HCT116 (cell line): ENCODE measurements at regions of chr1 and their contacts with region 1.

Region 1: DNA sequence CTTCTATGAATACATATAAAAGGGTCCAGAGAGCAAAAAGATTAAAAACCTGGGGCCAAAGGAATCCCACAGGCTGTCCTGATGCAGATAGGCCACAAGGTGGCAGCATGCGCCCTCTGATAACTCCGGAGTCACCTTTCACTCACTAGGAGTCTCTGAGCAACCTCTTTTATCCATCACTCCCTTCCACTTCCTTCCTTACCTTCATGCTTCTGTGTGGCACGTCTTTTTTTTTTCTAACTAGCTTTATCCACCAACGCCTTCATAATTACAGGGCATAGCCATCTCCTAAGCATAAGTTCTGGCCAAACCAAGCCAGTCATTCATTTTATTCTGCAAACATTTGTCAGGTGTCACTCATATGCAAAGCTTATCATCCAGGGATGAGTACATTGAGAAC is 3.9 kb upstream of the PGLYRP4 start:
- DNase-seq: peak; percentile 55
- ATAC-seq: peak; percentile 68
- H3K4me3 ChIP-seq: no peak overlapping the region
- H3K27ac ChIP-seq: no peak overlapping the region
- H3K4me1 ChIP-seq: no peaks in the 10 kb centered on the region; a peak in 1 of 4 replicates
- H3K27me3 ChIP-seq: peaks cover 22% of the 10 kb centered on the region
- CTCF ChIP-seq: peak; percentile 82 to 85 (median 84)
- POLR2A ChIP-seq: no peak
- RAD21 ChIP-seq: peak; percentile 88

Region 2: DNA sequence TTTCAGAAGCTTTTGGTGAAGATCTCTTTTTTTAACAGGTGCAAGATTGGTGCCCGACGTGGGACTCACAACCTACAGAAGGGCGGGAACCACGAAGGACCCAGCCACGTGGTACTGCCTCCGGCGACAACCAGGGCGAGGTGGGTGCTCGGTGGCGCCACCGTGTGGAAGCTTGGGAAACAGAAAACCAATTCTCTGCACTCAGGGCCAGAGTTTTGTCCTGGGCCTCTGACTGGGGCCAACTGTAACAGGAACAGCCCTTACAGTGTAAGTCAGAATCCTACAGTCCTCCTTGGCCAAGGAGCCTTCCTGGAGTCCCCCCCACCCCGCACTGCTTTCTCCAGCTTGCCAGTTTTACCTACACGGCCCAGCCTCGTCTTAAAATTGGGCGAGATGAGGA is 52.2 kb after region 1 on chr1:
- CTCF ChIA-PET with region 1: interaction called, 4 read pairs
- POLR2A ChIA-PET with region 1: no interaction called
- RAD21 ChIA-PET with region 1: no interaction called
- intact Hi-C with region 1: loop called (anchors 2 kb)
- DNase-seq: peak; percentile 39
- ATAC-seq: peak; percentile 87
- H3K4me3 ChIP-seq: no peak overlapping the region
- H3K27ac ChIP-seq: no peak overlapping the region
- H3K4me1 ChIP-seq: no peaks in the 10 kb centered on the region
- H3K27me3 ChIP-seq: peaks cover 59% of the 10 kb centered on the region
- CTCF ChIP-seq: peak; percentile 62 to 78 (median 68); a peak in 5 of 6 replicates
- POLR2A ChIP-seq: no peak
- RAD21 ChIP-seq: no peak; the same call in 1 of the 2 replicates

Region 3: GRCh38 chr1:153494976-153495535 is 142.5 kb after region 1 on chr1:
- CTCF ChIA-PET with region 1: interaction called, 133 read pairs
- POLR2A ChIA-PET with region 1: no interaction called
- RAD21 ChIA-PET with region 1: interaction called, 7 to 21 read pairs
- intact Hi-C with region 1: loop called (anchors 1 kb)
- DNase-seq: peak; percentile 56
- ATAC-seq: peak; percentile 82
- H3K4me3 ChIP-seq: no peak overlapping the region
- H3K27ac ChIP-seq: no peak overlapping the region
- H3K4me1 ChIP-seq: peaks cover 3 to 20% of the 10 kb centered on the region in 2 experiments; a peak in 3 of 4 replicates
- H3K27me3 ChIP-seq: 0 out of 2 replicates have a peak, but pooled peaks cover 3% of the 10 kb centered on the region
- CTCF ChIP-seq: peak; percentile 82 to 97 (median 92)
- POLR2A ChIP-seq: no peak
- RAD21 ChIP-seq: peak; percentile 95

Region 4: DNA sequence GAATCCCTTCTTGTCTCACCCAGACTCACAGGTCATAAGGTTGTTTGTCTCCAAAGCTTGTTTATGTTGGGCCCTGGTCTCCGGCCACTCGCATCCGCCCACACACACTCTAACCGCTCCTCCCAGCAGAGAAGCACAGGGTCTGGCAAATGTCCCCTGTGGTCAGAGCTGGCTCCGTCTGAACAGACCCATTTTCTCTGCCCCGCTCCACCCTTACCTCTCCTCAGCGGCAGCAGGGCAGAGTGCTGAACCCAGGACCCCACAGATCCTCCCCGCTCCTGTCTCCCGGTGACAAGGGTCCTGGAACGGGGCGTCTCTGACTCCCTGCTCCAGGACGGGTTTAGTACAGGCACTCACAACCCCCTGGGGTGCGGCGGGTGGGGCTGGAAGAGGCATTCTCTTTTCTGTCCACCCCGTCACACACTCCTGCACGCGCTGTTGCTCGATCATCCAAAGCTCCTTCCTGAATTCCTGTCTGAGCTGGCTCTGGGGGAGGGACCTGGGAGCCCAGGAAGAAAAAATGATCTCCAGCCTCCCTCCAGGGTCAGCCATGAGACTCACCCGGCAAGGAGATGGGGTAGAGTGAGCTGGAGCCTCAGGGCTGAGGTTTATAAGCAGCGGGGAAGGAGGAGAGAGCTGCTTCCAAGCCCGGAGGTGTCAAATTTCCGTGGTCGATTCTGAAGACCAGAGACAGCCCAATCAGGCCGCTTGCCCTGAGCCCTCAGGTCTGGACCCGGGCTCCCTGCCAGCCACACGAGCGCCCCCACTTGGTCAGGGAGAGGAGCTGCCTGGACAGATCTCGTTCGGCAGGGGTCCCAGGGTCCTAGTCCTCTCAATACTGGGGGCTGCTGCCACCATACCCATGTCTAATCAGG is 274.6 kb after region 1 on chr1 and contains the start of gene S100A13:
- CTCF ChIA-PET with region 1: no interaction called
- POLR2A ChIA-PET with region 1: no interaction called
- RAD21 ChIA-PET with region 1: no interaction called
- intact Hi-C with region 1: loop called (anchors 5 kb)
- DNase-seq: peak; percentile 93
- ATAC-seq: peak; percentile 87
- H3K4me3 ChIP-seq: peak within 1 kb of the TSS; percentile 65 to 72
- H3K27ac ChIP-seq: peak within 1 kb of the TSS; percentile 89
- H3K4me1 ChIP-seq: peaks cover 18 to 34% of the 10 kb centered on the region in 2 experiments
- H3K27me3 ChIP-seq: no peaks in the 10 kb centered on the region
- CTCF ChIP-seq: peak in 2 of 3 experiments; percentile 87 to 89; a peak in 4 of 6 replicates
- POLR2A ChIP-seq: peak; percentile 94
- RAD21 ChIP-seq: no peak
- total RNA-seq, gene S100A13: 143 TPM

Region 5: GRCh38 chr1:153749408-153750005 is 397.0 kb after region 1 on chr1:
- CTCF ChIA-PET with region 1: no interaction called
- POLR2A ChIA-PET with region 1: no interaction called
- RAD21 ChIA-PET with region 1: no interaction called
- intact Hi-C with region 1: loop called (anchors 2 kb)
- DNase-seq: peak; percentile 45
- ATAC-seq: peak; percentile 100
- H3K4me3 ChIP-seq: no peak overlapping the region
- H3K27ac ChIP-seq: no peak overlapping the region
- H3K4me1 ChIP-seq: no peaks in the 10 kb centered on the region
- H3K27me3 ChIP-seq: no peaks in the 10 kb centered on the region
- CTCF ChIP-seq: peak; percentile 86 to 94 (median 94)
- POLR2A ChIP-seq: no peak
- RAD21 ChIP-seq: peak; percentile 93

Region 6: DNA sequence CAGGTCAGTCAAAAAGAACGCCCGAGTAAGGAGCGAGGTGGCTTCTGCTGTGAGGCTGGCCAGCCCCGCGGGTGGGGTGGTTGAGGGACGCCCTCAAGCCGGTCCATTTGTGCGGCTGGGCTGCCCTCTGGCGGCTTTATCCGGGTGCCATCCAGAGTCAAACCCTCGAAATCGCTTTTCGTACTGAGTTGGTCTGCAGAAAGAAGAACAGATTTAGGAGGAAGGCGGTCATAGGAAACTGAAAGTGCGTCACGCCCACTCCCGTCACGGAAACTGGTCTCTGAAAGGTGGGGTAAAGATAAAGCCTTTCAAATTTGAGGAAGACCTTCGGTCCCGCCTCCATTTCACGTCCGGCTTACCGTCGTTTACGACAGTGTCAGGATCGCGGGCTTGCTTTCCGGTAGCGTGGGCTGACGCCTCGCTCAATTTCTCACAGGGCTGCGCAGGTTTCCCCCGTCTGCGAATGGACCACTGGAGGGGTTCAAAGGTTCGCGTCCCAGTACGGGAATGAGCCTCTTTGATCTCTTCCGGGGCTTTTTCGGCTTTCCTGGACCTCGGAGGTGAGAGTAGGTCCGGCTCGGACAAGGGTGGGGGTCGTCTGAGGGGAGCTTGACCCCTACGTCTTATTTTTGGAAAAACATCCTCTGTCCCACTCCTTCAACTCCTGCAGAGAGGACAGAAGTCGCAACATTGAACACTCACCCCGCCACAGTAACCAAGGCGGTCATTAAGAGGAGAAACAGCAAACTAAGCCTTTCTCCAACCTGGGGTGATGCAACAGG is 919.9 kb after region 1 on chr1 and contains the start of gene HAX1:
- CTCF ChIA-PET with region 1: no interaction called
- POLR2A ChIA-PET with region 1: no interaction called
- RAD21 ChIA-PET with region 1: no interaction called
- intact Hi-C with region 1: loop called (anchors 5 kb)
- DNase-seq: peak; percentile 96
- ATAC-seq: peak; percentile 94
- H3K4me3 ChIP-seq: peak within 1 kb of the TSS; percentile 78 to 97
- H3K27ac ChIP-seq: peak within 1 kb of the TSS; percentile 73
- H3K4me1 ChIP-seq: peaks cover 3 to 16% of the 10 kb centered on the region in 2 experiments; a peak in 3 of 4 replicates
- H3K27me3 ChIP-seq: no peaks in the 10 kb centered on the region
- CTCF ChIP-seq: peak; percentile 71 to 92 (median 91)
- POLR2A ChIP-seq: peak; percentile 48
- RAD21 ChIP-seq: peak; percentile 98
- total RNA-seq, gene HAX1: 93.6 TPM